CD8-positive, alpha-beta T cell (primary cell): ENCODE measurements at regions of chrX and their contacts with region 1.

Region 1: DNA sequence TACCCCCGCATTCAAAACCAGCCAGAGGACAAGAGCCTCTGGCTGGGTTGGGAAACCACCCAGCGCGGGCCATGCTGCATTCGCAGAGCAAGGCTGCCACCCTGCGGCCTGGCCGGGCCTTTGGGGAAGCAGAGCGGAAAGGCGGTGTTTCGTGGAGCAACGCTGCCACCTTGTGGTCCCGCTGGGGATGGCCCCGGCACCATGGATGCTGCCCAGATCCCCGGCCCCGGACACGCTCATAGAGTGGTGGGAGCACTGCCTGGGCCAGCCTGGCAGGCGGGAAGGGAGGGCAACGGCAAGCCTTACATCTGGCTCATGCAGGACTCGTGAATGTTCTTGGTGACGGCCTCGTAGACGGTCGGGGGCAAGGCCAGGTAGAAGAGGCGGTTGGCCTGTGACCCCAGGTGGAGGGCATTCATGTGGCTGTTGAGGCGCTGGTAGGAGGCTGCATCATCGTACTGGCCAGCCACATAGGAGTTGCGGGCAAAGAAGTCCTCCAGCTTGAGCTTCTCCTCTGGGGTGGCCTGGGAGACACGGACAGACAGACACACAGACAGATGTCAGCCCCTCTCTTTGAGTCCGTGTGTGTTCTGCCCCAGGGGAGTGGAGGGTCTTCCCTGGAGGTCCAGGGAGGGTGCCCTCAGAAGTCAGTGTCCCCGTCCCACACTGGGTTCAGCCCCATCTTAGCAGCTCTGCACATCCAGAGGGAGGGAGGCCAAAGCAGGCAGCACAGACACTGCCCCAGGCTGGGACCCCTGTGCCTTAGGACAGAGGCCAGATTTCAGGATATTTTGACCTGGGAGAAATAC is 11.6 kb downstream of the G6PD start:
- DNase-seq: peak; percentile 72 to 97 (median 87)
- ATAC-seq: peak; percentile 98
- H3K4me3 ChIP-seq: no peak overlapping the region
- H3K4me3 Mint-ChIP-seq: no peak overlapping the region
- H3K27ac ChIP-seq: no peak overlapping the region
- H3K27ac Mint-ChIP-seq: no peak overlapping the region
- H3K4me1 ChIP-seq: peaks cover 4% of the 10 kb centered on the region
- H3K4me1 Mint-ChIP-seq: peaks cover 10% of the 10 kb centered on the region
- H3K27me3 ChIP-seq: no peaks in the 10 kb centered on the region
- H3K27me3 Mint-ChIP-seq: no peaks in the 10 kb centered on the region
- CTCF ChIP-seq: peak; percentile 85

Region 2: DNA sequence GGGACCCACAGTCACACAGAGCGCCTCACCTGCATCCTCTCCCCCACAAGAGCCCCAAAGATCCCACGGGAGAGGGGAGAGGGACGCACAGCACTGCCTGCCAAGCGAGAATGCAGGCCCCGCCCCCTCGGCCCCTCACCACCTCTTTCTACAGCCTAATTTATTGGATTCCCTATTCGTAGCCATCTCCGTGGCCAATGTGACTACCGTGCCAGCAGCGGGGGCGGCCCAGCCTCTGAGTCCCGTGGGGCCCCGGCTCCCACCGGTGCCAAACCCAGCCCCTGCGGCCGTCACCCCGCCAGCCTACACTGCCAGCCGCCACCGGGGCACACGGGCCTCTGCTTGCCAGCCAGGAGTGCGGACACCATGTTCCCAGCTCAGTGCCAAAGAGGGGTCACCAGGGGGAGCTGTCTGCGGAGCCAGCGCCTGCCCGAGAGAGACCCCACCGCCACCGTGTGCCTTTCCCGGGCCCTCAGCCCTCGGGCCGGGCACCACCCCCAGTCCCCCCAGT is 790.8 kb before region 1 on chrX:
- CTCF ChIA-PET with region 1: no interaction called
- POLR2A ChIA-PET with region 1: no interaction called
- intact Hi-C with region 1: no loop called
- DNase-seq: peak in 2 of 9 experiments; percentile 40 to 49
- ATAC-seq: no peak
- H3K4me3 ChIP-seq: no peak overlapping the region
- H3K4me3 Mint-ChIP-seq: no peak overlapping the region
- H3K27ac ChIP-seq: no peak overlapping the region
- H3K27ac Mint-ChIP-seq: no peak overlapping the region
- H3K4me1 ChIP-seq: peaks cover 17% of the 10 kb centered on the region
- H3K4me1 Mint-ChIP-seq: peaks cover 20% of the 10 kb centered on the region
- H3K27me3 ChIP-seq: no peaks in the 10 kb centered on the region
- H3K27me3 Mint-ChIP-seq: peaks cover 3% of the 10 kb centered on the region
- CTCF ChIP-seq: no peak

Region 3: GRCh38 chrX:153763989-153764755 is 770.9 kb before region 1 on chrX and contains the start of gene PLXNB3:
- CTCF ChIA-PET with region 1: no interaction called
- POLR2A ChIA-PET with region 1: no interaction called
- intact Hi-C with region 1: loop called in 1 of 2 experiments (anchors 1 kb)
- DNase-seq: peak; percentile 45 to 89 (median 70)
- ATAC-seq: peak; percentile 88
- H3K4me3 ChIP-seq: no peak within 1 kb of the TSS
- H3K4me3 Mint-ChIP-seq: no peak within 1 kb of the TSS
- H3K27ac ChIP-seq: no peak within 1 kb of the TSS
- H3K27ac Mint-ChIP-seq: no peak within 1 kb of the TSS
- H3K4me1 ChIP-seq: peaks cover 10% of the 10 kb centered on the region
- H3K4me1 Mint-ChIP-seq: peaks cover 10% of the 10 kb centered on the region
- H3K27me3 ChIP-seq: no peaks in the 10 kb centered on the region
- H3K27me3 Mint-ChIP-seq: no peaks in the 10 kb centered on the region
- CTCF ChIP-seq: peak; percentile 52
- total RNA-seq, gene PLXNB3: 0.35 to 0.50 TPM

Region 4: GRCh38 chrX:153947009-153947769 is 587.9 kb before region 1 on chrX:
- CTCF ChIA-PET with region 1: interaction called, 3 read pairs
- POLR2A ChIA-PET with region 1: no interaction called
- intact Hi-C with region 1: loop called in 1 of 2 experiments (anchors 2 kb)
- DNase-seq: peak; percentile 57 to 87 (median 81)
- ATAC-seq: peak; percentile 87
- H3K4me3 ChIP-seq: no peak overlapping the region
- H3K4me3 Mint-ChIP-seq: peak overlapping the region; percentile 27
- H3K27ac ChIP-seq: peak overlapping the region in 1 of 2 experiments; percentile 53
- H3K27ac Mint-ChIP-seq: peak overlapping the region; percentile 81
- H3K4me1 ChIP-seq: peaks cover 42% of the 10 kb centered on the region
- H3K4me1 Mint-ChIP-seq: peaks cover 13% of the 10 kb centered on the region
- H3K27me3 ChIP-seq: no peaks in the 10 kb centered on the region
- H3K27me3 Mint-ChIP-seq: no peaks in the 10 kb centered on the region
- CTCF ChIP-seq: peak; percentile 71

Region 5: GRCh38 chrX:154013614-154014360 is 521.3 kb before region 1 on chrX:
- CTCF ChIA-PET with region 1: interaction called, 3 read pairs
- POLR2A ChIA-PET with region 1: no interaction called
- intact Hi-C with region 1: loop called in 1 of 2 experiments (anchors 1 kb)
- DNase-seq: peak in 8 of 9 experiments; percentile 25 to 72 (median 58)
- ATAC-seq: peak; percentile 87
- H3K4me3 ChIP-seq: no peak overlapping the region
- H3K4me3 Mint-ChIP-seq: no peak overlapping the region
- H3K27ac ChIP-seq: no peak overlapping the region
- H3K27ac Mint-ChIP-seq: no peak overlapping the region
- H3K4me1 ChIP-seq: peaks cover 15% of the 10 kb centered on the region
- H3K4me1 Mint-ChIP-seq: peaks cover 19% of the 10 kb centered on the region
- H3K27me3 ChIP-seq: no peaks in the 10 kb centered on the region
- H3K27me3 Mint-ChIP-seq: no peaks in the 10 kb centered on the region
- CTCF ChIP-seq: peak; percentile 73

Region 6: GRCh38 chrX:154317391-154317995 is 217.6 kb before region 1 on chrX:
- CTCF ChIA-PET with region 1: no interaction called
- POLR2A ChIA-PET with region 1: no interaction called
- intact Hi-C with region 1: loop called in 1 of 2 experiments (anchors 5 kb)
- DNase-seq: peak in 4 of 9 experiments; percentile 13 to 40 (median 24)
- ATAC-seq: no peak
- H3K4me3 ChIP-seq: no peak overlapping the region
- H3K4me3 Mint-ChIP-seq: peak overlapping the region; percentile 26
- H3K27ac ChIP-seq: no peak overlapping the region
- H3K27ac Mint-ChIP-seq: peak overlapping the region; percentile 52
- H3K4me1 ChIP-seq: peaks cover 35% of the 10 kb centered on the region
- H3K4me1 Mint-ChIP-seq: peaks cover 37% of the 10 kb centered on the region
- H3K27me3 ChIP-seq: no peaks in the 10 kb centered on the region
- H3K27me3 Mint-ChIP-seq: no peaks in the 10 kb centered on the region
- CTCF ChIP-seq: peak; percentile 14

Region 7: GRCh38 chrX:154370882-154371770 is 163.9 kb before region 1 on chrX:
- CTCF ChIA-PET with region 1: interaction called, 12 read pairs
- POLR2A ChIA-PET with region 1: interaction called, 3 read pairs
- intact Hi-C with region 1: no loop called
- DNase-seq: peak; percentile 83 to 95 (median 91)
- ATAC-seq: peak; percentile 59
- H3K4me3 ChIP-seq: peak overlapping the region; percentile 81 to 89
- H3K4me3 Mint-ChIP-seq: peak overlapping the region; percentile 83
- H3K27ac ChIP-seq: peak overlapping the region; percentile 65 to 95
- H3K27ac Mint-ChIP-seq: peak overlapping the region; percentile 83
- H3K4me1 ChIP-seq: peaks cover 48% of the 10 kb centered on the region
- H3K4me1 Mint-ChIP-seq: peaks cover 21% of the 10 kb centered on the region
- H3K27me3 ChIP-seq: no peaks in the 10 kb centered on the region
- H3K27me3 Mint-ChIP-seq: no peaks in the 10 kb centered on the region
- CTCF ChIP-seq: no peak

Region 8: GRCh38 chrX:154411322-154411980 is 123.6 kb before region 1 on chrX and contains the start of gene TAFAZZIN:
- CTCF ChIA-PET with region 1: no interaction called
- POLR2A ChIA-PET with region 1: no interaction called
- intact Hi-C with region 1: loop called in 1 of 2 experiments (anchors 5 kb)
- DNase-seq: peak; percentile 37 to 87 (median 70)
- ATAC-seq: peak; percentile 79
- H3K4me3 ChIP-seq: peak within 1 kb of the TSS; percentile 49 to 68
- H3K4me3 Mint-ChIP-seq: peak within 1 kb of the TSS; percentile 91
- H3K27ac ChIP-seq: peak within 1 kb of the TSS; percentile 55 to 73
- H3K27ac Mint-ChIP-seq: peak within 1 kb of the TSS; percentile 94
- H3K4me1 ChIP-seq: peaks cover 9% of the 10 kb centered on the region
- H3K4me1 Mint-ChIP-seq: peaks cover 6% of the 10 kb centered on the region
- H3K27me3 ChIP-seq: no peaks in the 10 kb centered on the region
- H3K27me3 Mint-ChIP-seq: no peaks in the 10 kb centered on the region
- CTCF ChIP-seq: no peak
- total RNA-seq, gene TAFAZZIN: 48.9 to 52.3 TPM

Region 9: GRCh38 chrX:154850957-154851611 is 316.0 kb after region 1 on chrX:
- CTCF ChIA-PET with region 1: no interaction called
- POLR2A ChIA-PET with region 1: no interaction called
- intact Hi-C with region 1: no loop called
- DNase-seq: no peak
- ATAC-seq: no peak
- H3K4me3 ChIP-seq: no peak overlapping the region
- H3K4me3 Mint-ChIP-seq: no peak overlapping the region
- H3K27ac ChIP-seq: no peak overlapping the region
- H3K27ac Mint-ChIP-seq: no peak overlapping the region
- H3K4me1 ChIP-seq: no peaks in the 10 kb centered on the region
- H3K4me1 Mint-ChIP-seq: no peaks in the 10 kb centered on the region
- H3K27me3 ChIP-seq: no peaks in the 10 kb centered on the region
- H3K27me3 Mint-ChIP-seq: no peaks in the 10 kb centered on the region
- CTCF ChIP-seq: no peak

Region 10: DNA sequence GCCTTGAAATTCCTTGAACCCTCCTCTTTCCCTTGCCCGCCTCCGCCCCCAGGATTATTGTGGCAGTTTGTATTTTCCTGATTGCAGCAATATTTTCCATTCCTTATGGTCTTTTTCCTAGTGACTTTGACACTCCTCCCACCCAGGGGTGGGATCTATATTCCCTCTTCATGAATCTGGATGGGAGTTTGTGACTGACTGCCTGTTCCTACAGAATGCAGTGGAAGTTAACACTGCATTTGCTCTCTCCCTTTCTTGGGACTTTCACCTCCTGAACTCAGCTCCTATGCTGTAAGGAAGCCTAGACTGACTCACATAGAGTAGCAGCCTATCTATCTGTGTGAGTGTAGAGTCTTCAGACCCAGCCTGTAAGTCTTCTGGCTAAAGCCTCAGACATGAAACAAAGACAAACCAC is 493.8 kb after region 1 on chrX:
- CTCF ChIA-PET with region 1: no interaction called
- POLR2A ChIA-PET with region 1: no interaction called
- intact Hi-C with region 1: no loop called
- DNase-seq: no peak
- ATAC-seq: no peak
- H3K4me3 ChIP-seq: no peak overlapping the region
- H3K4me3 Mint-ChIP-seq: no peak overlapping the region
- H3K27ac ChIP-seq: no peak overlapping the region
- H3K27ac Mint-ChIP-seq: no peak overlapping the region
- H3K4me1 ChIP-seq: no peaks in the 10 kb centered on the region
- H3K4me1 Mint-ChIP-seq: peaks cover 32% of the 10 kb centered on the region
- H3K27me3 ChIP-seq: no peaks in the 10 kb centered on the region
- H3K27me3 Mint-ChIP-seq: no peaks in the 10 kb centered on the region
- CTCF ChIP-seq: no peak